Mammary epithelial cell (primary cell): ENCODE measurements at regions of chr5 and their contacts with region 1.

Region 1: DNA sequence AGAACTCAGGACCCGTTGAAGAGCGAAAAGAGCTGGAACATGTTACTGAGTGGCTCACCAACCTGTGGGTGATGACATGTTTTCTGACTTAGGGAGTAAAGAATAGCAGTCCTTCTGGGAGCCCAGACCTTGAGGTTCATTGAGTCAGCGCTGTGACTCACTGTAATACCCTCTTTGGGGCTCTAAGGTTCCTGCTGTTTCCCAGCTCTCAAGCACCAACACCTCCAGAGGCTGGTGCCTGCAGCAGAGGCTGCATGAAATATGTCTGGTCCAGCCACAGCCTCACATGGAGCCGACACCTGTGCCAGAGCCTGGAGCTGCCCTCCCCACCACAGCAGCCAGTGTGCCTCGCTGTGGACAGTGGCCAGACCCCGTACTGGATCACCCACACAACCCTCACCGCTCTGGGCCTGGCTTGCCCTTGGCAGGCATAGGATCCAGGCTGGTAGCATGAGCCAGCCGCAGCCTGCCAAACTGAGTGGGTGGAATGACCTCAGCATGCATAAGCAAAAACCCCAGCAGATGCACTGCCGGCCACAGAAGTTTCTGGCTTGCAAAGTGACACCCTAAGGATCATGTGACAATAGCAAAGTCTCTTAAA is 143.5 kb upstream of the MRPS30 start:
- DNase-seq: peak; percentile 96
- H3K4me3 ChIP-seq: peak overlapping the region in 1 of 3 experiments; percentile 13
- H3K27ac ChIP-seq: peak overlapping the region; percentile 53
- H3K4me1 ChIP-seq: peaks cover 19% of the 10 kb centered on the region
- H3K27me3 ChIP-seq: no peaks in the 10 kb centered on the region
- CTCF ChIP-seq: no peak

Region 2: DNA sequence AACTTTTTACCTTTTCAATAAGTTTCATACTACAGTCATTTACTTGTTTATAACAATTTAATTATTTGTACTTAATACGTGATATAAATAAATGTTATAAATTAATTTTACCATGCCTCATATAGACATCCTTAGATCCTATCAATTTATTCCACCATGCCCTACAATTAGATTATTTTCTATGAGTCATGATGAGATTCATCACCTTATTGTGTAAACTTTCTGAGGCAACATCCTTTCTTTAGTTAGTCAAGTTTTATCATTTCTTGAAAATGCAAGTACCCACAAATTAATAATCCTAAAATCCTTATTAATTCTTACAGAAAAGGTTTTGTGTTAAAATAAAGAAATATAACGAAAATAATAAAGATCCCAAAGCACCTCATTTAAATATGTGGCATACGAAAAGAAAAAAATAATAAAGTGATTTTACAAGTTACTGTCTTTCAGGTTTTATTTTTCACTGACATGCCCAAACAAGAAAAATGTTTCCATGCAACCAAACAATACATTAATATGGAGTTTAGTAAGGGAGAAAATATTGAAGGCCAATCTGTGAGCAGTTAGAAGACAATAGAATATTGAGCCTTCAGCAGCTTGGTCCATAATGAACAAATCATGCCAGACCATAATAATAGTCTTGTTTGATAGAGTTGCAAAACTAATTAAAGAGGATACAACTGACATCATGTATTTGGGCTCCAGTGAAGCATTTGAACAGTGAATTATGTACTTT is 45.2 kb before region 1 on chr5:
- CTCF ChIA-PET with region 1: no interaction called
- dilution Hi-C with region 1: no loop called
- in situ Hi-C with region 1: no loop called
- intact Hi-C with region 1: loop called (anchors 2 kb)
- DNase-seq: peak; percentile 67
- H3K4me3 ChIP-seq: peak overlapping the region in 1 of 3 experiments; percentile 5
- H3K27ac ChIP-seq: peak overlapping the region; percentile 92
- H3K4me1 ChIP-seq: peaks cover 7% of the 10 kb centered on the region
- H3K27me3 ChIP-seq: no peaks in the 10 kb centered on the region
- CTCF ChIP-seq: no peak

Region 3: DNA sequence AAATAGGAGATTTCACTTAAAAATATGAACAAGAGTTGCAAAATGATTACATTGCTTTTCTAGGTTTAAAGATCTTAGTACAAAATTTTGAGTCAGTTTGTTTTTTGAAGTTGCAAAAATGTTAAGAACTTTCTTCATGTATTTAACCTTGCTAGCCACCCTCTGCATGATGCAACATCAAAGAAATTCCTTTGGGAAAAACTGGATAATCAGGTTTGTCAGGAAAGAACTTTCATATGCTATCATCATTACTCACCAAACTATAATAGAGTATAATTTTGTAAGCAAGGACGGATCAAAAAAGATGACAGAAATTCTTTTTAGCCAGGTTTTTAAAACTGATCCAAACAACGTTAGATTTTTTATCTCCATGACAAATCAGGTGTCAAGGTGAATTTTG is 26.6 kb after region 1 on chr5:
- CTCF ChIA-PET with region 1: no interaction called
- dilution Hi-C with region 1: no loop called
- in situ Hi-C with region 1: no loop called
- intact Hi-C with region 1: loop called (anchors 1 kb)
- DNase-seq: peak; percentile 74
- H3K4me3 ChIP-seq: peak overlapping the region in 1 of 3 experiments; percentile 24
- H3K27ac ChIP-seq: peak overlapping the region; percentile 55
- H3K4me1 ChIP-seq: peaks cover 20% of the 10 kb centered on the region
- H3K27me3 ChIP-seq: no peaks in the 10 kb centered on the region
- CTCF ChIP-seq: no peak

Region 4: GRCh38 chr5:44740659-44741058 is 75.5 kb after region 1 on chr5:
- CTCF ChIA-PET with region 1: no interaction called
- dilution Hi-C with region 1: no loop called
- in situ Hi-C with region 1: no loop called
- intact Hi-C with region 1: loop called (anchors 5 kb)
- DNase-seq: peak; percentile 4
- H3K4me3 ChIP-seq: no peak overlapping the region
- H3K27ac ChIP-seq: no peak overlapping the region
- H3K4me1 ChIP-seq: no peaks in the 10 kb centered on the region
- H3K27me3 ChIP-seq: no peaks in the 10 kb centered on the region
- CTCF ChIP-seq: peak in 1 of 2 donors; percentile 50